Naive thymus-derived CD4-positive, alpha-beta T cell (primary cell): ENCODE measurements at regions of chr13 and their contacts with region 1.

Region 1: GRCh38 chr13:48580185-48580803 is 47.4 kb upstream of the RCBTB2 start:
- DNase-seq: peak; percentile 44 to 79 (median 61)
- ATAC-seq: peak; percentile 84
- H3K4me3 ChIP-seq: no peak overlapping the region
- H3K4me3 Mint-ChIP-seq: no peak overlapping the region
- H3K27ac ChIP-seq: no peak overlapping the region
- H3K27ac Mint-ChIP-seq: no peak overlapping the region
- H3K4me1 ChIP-seq: peaks cover 0 to 6% of the 10 kb centered on the region in 2 donors
- H3K4me1 Mint-ChIP-seq: peaks cover 0 to 25% (median 6%) of the 10 kb centered on the region in 7 donors
- H3K27me3 ChIP-seq: no peaks in the 10 kb centered on the region
- H3K27me3 Mint-ChIP-seq: peaks cover 0 to 68% (median 3%) of the 10 kb centered on the region in 5 donors

Region 2: DNA sequence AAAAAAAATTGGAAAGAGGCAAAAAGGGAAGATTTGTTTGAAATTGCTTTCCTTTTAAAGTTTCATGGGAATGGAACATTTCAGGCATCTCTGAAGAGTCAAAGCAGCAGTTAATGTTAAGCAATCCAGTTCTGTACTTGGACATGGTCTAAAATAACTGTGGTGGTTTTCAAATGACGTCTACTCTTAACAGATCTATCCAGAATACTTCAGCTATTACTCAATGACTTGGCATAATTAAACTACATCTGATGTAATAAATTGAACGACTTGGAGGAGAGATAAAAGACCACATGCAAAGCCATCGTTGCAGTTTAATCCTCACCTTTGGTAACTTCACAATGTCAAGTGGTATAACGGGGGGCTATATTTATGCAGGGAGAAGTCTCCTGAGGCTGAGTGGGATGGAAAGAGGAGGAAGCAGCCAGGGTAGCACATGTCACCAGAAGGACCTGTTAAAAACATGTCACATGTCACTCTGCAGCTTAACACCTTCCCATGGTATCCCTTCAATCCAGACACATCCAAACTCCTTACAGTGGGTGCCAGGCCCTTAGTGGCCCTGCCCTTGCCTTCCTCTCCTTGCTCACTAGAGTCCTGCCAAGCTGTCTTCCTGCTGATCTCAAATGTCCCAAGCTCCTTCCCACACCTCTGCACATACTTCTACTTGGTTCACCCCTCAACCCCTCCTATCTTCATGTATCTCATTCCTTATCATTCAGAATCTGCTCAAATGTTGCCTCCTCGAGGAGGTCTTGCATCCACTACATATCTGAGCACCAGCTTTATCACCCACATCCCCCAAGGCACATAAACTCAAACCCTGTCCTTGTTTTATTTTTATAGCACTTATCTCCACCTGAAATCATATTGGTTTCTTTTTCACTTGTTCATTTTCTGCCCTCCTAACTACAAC is 907.0 kb before region 1 on chr13:
- CTCF ChIA-PET with region 1: no interaction called
- POLR2A ChIA-PET with region 1: no interaction called
- intact Hi-C with region 1: no loop called
- DNase-seq: no peak
- ATAC-seq: no peak
- H3K4me3 ChIP-seq: no peak overlapping the region
- H3K4me3 Mint-ChIP-seq: no peak overlapping the region
- H3K27ac ChIP-seq: no peak overlapping the region
- H3K27ac Mint-ChIP-seq: no peak overlapping the region
- H3K4me1 ChIP-seq: no peaks in the 10 kb centered on the region
- H3K4me1 Mint-ChIP-seq: no peaks in the 10 kb centered on the region
- H3K27me3 ChIP-seq: no peaks in the 10 kb centered on the region
- H3K27me3 Mint-ChIP-seq: peaks cover 0 to 12% (median 4%) of the 10 kb centered on the region in 5 donors

Region 3: DNA sequence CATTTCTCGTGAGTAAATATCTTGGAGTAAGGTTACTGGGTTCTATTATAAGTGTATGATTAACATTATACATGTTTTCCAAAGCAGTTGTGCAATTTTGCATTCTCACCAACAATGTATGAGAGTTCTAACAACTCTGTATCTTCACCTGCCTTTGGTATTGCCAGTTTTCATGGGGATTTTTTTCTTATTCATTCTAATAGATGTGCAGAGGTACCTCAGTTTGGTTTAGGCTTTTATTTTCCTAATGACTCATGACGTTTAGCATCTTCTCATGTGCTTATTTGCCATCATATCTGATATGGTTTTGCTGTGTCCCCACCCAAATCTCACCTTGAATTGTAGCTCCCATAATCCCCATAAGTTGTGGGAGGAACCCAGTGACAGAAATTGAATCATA is 550.4 kb before region 1 on chr13:
- CTCF ChIA-PET with region 1: no interaction called
- POLR2A ChIA-PET with region 1: no interaction called
- intact Hi-C with region 1: no loop called
- DNase-seq: no peak
- ATAC-seq: no peak
- H3K4me3 ChIP-seq: no peak overlapping the region
- H3K4me3 Mint-ChIP-seq: no peak overlapping the region
- H3K27ac ChIP-seq: no peak overlapping the region
- H3K27ac Mint-ChIP-seq: no peak overlapping the region
- H3K4me1 ChIP-seq: no peaks in the 10 kb centered on the region
- H3K4me1 Mint-ChIP-seq: peaks cover 2 to 20% (median 11%) of the 10 kb centered on the region in 7 donors
- H3K27me3 ChIP-seq: no peaks in the 10 kb centered on the region
- H3K27me3 Mint-ChIP-seq: no peaks in the 10 kb centered on the region

Region 4: GRCh38 chr13:48094781-48095502 is 485.4 kb before region 1 on chr13 and contains the start of gene MED4:
- CTCF ChIA-PET with region 1: interaction called, 3 read pairs
- POLR2A ChIA-PET with region 1: no interaction called
- intact Hi-C with region 1: loop called in 1 of 2 experiments (anchors 10 kb)
- DNase-seq: peak; percentile 94 to 99 (median 98)
- ATAC-seq: peak; percentile 100
- H3K4me3 ChIP-seq: peak within 1 kb of the TSS; percentile 90
- H3K4me3 Mint-ChIP-seq: peak within 1 kb of the TSS; percentile 94 to 99 (median 96)
- H3K27ac ChIP-seq: peak within 1 kb of the TSS; percentile 99
- H3K27ac Mint-ChIP-seq: peak within 1 kb of the TSS; percentile 92 to 98 (median 96)
- H3K4me1 ChIP-seq: peaks cover 13 to 26% of the 10 kb centered on the region in 2 donors
- H3K4me1 Mint-ChIP-seq: peaks cover 26 to 56% (median 48%) of the 10 kb centered on the region in 7 donors
- H3K27me3 ChIP-seq: no peaks in the 10 kb centered on the region
- H3K27me3 Mint-ChIP-seq: peaks cover 0 to 9% (median 0%) of the 10 kb centered on the region in 5 donors
- total RNA-seq, gene MED4: 43.4 to 60.9 (median 50.0) TPM

Region 5: DNA sequence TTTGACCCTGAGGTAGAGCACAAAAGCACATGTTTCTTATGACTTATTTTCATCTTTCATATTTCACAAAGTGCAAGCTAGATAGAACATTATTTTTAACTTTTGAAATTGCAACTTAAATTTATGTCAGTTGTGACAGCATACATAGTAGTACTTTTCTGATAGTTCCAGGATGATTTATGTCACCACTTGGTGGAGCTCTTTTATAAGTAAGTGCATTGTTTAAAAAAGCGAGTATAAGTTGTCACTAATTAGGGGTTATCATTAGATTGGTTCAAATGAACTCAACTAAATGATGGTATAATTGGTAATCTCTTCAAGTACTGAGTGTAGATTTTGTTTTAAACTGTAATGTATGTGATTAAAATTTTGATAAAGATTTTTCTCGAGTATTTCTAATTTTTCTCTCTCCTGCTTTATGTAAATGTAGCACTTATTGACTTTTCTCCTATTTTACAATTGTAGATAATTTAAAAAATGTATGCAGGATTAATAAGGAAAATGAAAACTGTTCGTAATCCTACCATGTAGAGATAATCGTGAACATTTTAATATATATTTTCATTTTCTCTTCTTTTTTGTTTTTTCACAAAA is 245.7 kb before region 1 on chr13:
- CTCF ChIA-PET with region 1: interaction called, 126 read pairs
- POLR2A ChIA-PET with region 1: interaction called, 6 read pairs
- intact Hi-C with region 1: loop called (anchors 1 kb)
- DNase-seq: peak in 6 of 9 donors; percentile 27 to 64 (median 48)
- ATAC-seq: peak; percentile 79
- H3K4me3 ChIP-seq: no peak overlapping the region
- H3K4me3 Mint-ChIP-seq: no peak overlapping the region
- H3K27ac ChIP-seq: no peak overlapping the region
- H3K27ac Mint-ChIP-seq: no peak overlapping the region
- H3K4me1 ChIP-seq: no peaks in the 10 kb centered on the region
- H3K4me1 Mint-ChIP-seq: peaks cover 0 to 23% (median 5%) of the 10 kb centered on the region in 7 donors
- H3K27me3 ChIP-seq: no peaks in the 10 kb centered on the region
- H3K27me3 Mint-ChIP-seq: no peaks in the 10 kb centered on the region

Region 6: GRCh38 chr13:48400850-48401291 is 179.4 kb before region 1 on chr13:
- CTCF ChIA-PET with region 1: interaction called, 66 read pairs
- POLR2A ChIA-PET with region 1: interaction called, 12 read pairs
- intact Hi-C with region 1: loop called (anchors 1 kb)
- DNase-seq: peak in 2 of 9 donors; percentile 36 to 42
- ATAC-seq: peak; percentile 74
- H3K4me3 ChIP-seq: no peak overlapping the region
- H3K4me3 Mint-ChIP-seq: peak overlapping the region; percentile 1 to 83 (median 54)
- H3K27ac ChIP-seq: peak overlapping the region; percentile 49
- H3K27ac Mint-ChIP-seq: peak overlapping the region; percentile 1 to 90 (median 50)
- H3K4me1 ChIP-seq: peaks cover 33 to 40% of the 10 kb centered on the region in 2 donors
- H3K4me1 Mint-ChIP-seq: peaks cover 23 to 78% (median 63%) of the 10 kb centered on the region in 7 donors
- H3K27me3 ChIP-seq: no peaks in the 10 kb centered on the region
- H3K27me3 Mint-ChIP-seq: no peaks in the 10 kb centered on the region

Region 7: DNA sequence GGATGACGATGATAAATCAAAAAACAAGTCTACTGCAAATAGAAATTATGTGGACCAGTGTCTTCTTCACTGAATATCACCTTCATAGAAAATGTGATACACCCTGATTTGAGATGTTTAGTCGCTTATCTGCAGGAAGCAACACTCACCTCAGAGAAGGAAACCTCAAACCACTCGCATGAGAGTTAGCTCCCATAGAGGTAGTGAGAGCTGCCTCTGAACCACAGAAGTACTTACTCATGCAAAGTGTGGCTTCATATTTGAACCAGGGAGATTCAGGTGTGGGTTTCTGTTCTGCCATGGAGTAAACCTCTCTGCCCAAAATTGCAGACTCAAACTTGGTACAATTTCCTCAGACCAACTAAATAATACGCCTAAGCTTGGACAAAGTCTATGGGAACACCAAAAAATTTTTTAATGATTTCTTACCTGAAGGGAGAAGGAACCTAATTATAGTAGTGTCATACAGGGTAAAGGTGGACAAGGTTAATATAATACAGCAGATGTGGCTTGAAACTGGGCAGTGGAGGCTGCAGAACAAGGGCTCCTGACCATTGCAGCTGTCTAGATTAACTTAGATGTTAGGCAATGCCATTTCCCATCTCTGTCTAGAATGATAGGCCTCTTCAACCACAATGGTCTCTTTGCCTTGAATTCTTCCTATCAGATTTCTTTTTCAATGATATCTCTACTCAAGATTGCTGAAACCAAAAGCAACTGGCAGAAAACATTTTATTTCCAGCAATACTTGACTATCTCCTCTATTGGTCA is 17.8 kb before region 1 on chr13:
- CTCF ChIA-PET with region 1: interaction called, 18 read pairs
- POLR2A ChIA-PET with region 1: interaction called, 3 read pairs
- intact Hi-C with region 1: loop called (anchors 1 kb)
- DNase-seq: peak in 8 of 9 donors; percentile 67 to 87 (median 79)
- ATAC-seq: peak; percentile 100
- H3K4me3 ChIP-seq: peak overlapping the region; percentile 12
- H3K4me3 Mint-ChIP-seq: peak overlapping the region in 9 of 10 donors; percentile 0 to 68 (median 54)
- H3K27ac ChIP-seq: no peak overlapping the region
- H3K27ac Mint-ChIP-seq: peak overlapping the region in 2 of 9 donors; percentile 71 to 82
- H3K4me1 ChIP-seq: peaks cover 22 to 31% of the 10 kb centered on the region in 2 donors
- H3K4me1 Mint-ChIP-seq: peaks cover 28 to 51% (median 36%) of the 10 kb centered on the region in 7 donors
- H3K27me3 ChIP-seq: no peaks in the 10 kb centered on the region
- H3K27me3 Mint-ChIP-seq: peaks cover 7 to 67% (median 13%) of the 10 kb centered on the region in 5 donors